CD8-positive, alpha-beta T cell (primary cell): ENCODE measurements at regions of chr6 and their contacts with region 1.

Region 1: DNA sequence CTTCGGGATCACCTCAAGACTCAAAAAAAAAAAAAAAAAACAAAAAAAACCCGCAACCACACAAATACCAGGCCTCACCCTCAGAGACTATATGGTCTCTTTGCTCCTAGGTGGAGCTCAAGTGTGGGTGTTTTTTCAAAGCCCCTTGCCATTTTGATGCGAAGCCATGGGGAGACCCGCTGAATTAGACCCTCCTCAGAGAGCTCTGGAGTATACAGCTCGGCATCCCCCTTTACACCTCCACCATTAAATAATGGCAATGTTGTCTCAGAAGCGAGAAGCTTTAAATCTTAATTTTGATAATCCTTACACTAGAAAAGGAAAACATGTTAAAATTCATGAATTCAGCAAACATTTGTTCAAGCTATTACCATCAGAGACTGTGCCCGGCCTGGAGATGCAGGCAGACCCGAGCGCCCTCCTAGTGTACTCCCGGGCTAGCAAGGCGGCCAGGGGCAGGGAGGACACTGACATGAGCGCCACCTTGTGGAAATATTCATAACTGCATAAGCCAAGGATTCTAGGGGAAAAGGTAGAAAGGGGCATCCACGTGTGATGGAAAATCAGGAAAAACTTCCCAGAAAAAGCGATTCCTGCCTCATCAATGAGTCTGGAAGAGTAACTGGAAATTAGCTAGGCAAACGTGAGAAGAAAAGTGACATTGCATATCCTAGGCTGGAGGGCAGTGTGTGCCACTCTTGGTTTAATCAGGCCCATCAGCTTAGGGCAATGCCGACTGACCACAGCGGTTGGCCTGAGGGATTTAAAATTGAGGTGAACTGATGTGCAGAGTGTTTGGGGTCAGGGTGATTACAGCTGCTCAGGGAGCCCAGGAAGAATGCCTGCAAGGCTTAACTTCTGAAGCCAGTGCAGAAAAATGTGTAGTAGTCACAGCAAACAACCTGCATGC is 72.5 kb downstream of the B3GAT2 start:
- DNase-seq: peak; percentile 12 to 68 (median 55)
- ATAC-seq: peak; percentile 89
- H3K4me3 ChIP-seq: no peak overlapping the region
- H3K4me3 Mint-ChIP-seq: no peak overlapping the region
- H3K27ac ChIP-seq: no peak overlapping the region
- H3K27ac Mint-ChIP-seq: no peak overlapping the region
- H3K4me1 ChIP-seq: no peaks in the 10 kb centered on the region
- H3K4me1 Mint-ChIP-seq: no peaks in the 10 kb centered on the region
- H3K27me3 ChIP-seq: peaks cover 0 to 2% of the 10 kb centered on the region in 2 experiments
- H3K27me3 Mint-ChIP-seq: peaks cover 21% of the 10 kb centered on the region
- CTCF ChIP-seq: peak; percentile 95

Region 2: GRCh38 chr6:70310063-70310694 is 574.1 kb before region 1 on chr6:
- CTCF ChIA-PET with region 1: interaction called, 5 read pairs
- POLR2A ChIA-PET with region 1: no interaction called
- intact Hi-C with region 1: loop called (anchors 1 to 5 kb)
- DNase-seq: peak in 2 of 9 experiments; percentile 28 to 44
- ATAC-seq: no peak
- H3K4me3 ChIP-seq: no peak overlapping the region
- H3K4me3 Mint-ChIP-seq: no peak overlapping the region
- H3K27ac ChIP-seq: no peak overlapping the region
- H3K27ac Mint-ChIP-seq: no peak overlapping the region
- H3K4me1 ChIP-seq: no peaks in the 10 kb centered on the region
- H3K4me1 Mint-ChIP-seq: no peaks in the 10 kb centered on the region
- H3K27me3 ChIP-seq: no peaks in the 10 kb centered on the region
- H3K27me3 Mint-ChIP-seq: peaks cover 8% of the 10 kb centered on the region
- CTCF ChIP-seq: peak; percentile 49

Region 3: DNA sequence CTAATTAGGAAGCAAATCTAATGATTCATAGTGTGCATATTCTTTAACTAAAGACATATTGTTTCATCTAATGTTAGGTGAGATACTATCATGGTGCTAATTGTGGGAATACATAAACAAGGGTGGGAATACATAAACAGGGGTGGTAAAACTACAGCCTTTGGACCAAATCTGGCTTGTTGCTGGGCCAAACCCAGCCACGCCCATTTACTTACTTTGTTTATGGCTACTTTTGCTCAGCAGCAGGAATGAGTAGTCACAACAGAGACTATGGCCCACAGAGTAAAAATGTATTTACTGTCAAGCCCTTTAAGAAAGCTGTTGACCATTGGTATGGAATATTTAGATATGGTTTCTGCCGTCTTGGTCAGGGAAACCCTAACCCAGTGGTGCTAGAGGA is 439.3 kb before region 1 on chr6:
- CTCF ChIA-PET with region 1: no interaction called
- POLR2A ChIA-PET with region 1: no interaction called
- intact Hi-C with region 1: no loop called
- DNase-seq: no peak
- ATAC-seq: no peak
- H3K4me3 ChIP-seq: no peak overlapping the region
- H3K4me3 Mint-ChIP-seq: no peak overlapping the region
- H3K27ac ChIP-seq: no peak overlapping the region
- H3K27ac Mint-ChIP-seq: no peak overlapping the region
- H3K4me1 ChIP-seq: no peaks in the 10 kb centered on the region
- H3K4me1 Mint-ChIP-seq: no peaks in the 10 kb centered on the region
- H3K27me3 ChIP-seq: no peaks in the 10 kb centered on the region
- H3K27me3 Mint-ChIP-seq: no peaks in the 10 kb centered on the region
- CTCF ChIP-seq: no peak

Region 4: GRCh38 chr6:70700922-70701876 is 183.1 kb before region 1 on chr6:
- CTCF ChIA-PET with region 1: interaction called, 65 read pairs
- POLR2A ChIA-PET with region 1: no interaction called
- intact Hi-C with region 1: loop called (anchors 1 kb)
- DNase-seq: no peak
- ATAC-seq: no peak
- H3K4me3 ChIP-seq: no peak overlapping the region
- H3K4me3 Mint-ChIP-seq: no peak overlapping the region
- H3K27ac ChIP-seq: no peak overlapping the region
- H3K27ac Mint-ChIP-seq: no peak overlapping the region
- H3K4me1 ChIP-seq: no peaks in the 10 kb centered on the region
- H3K4me1 Mint-ChIP-seq: peaks cover 66% of the 10 kb centered on the region
- H3K27me3 ChIP-seq: no peaks in the 10 kb centered on the region
- H3K27me3 Mint-ChIP-seq: no peaks in the 10 kb centered on the region
- CTCF ChIP-seq: no peak

Region 5: DNA sequence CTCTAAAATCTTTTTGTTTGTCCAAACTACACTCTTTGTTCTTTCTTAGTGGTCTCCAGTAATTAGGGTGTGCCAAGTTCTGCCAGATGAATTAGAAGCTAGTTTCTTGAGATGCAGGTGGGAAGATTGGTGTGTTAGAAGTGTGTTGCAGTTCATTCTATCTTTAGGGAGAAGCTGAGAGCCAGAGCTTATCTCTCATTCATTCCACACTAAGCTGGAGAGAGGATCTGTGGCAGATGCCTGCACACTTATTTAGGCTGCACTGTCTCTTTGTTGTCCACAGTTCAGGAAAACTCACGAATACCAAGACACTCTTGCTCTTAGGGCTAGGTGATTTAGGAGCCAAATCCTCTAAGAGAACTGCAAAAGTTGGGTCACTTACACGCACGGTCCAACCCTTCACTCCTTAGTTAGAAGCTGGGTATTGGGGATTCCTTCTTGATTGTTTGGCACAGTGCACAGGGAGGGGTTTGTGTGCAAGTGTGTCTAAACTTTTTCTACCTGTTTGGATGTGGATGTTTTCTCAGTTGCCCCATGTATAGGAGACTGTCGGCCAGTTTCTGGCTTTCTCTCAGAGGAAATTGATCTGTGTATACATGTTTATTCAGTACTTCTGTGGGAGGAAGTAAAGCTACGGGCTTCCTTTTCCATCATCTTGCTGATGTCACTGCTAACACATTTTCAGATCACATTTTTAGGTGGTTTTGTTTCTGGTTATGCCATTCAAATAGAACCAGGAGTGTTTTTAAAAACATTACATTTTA is 167.1 kb before region 1 on chr6:
- CTCF ChIA-PET with region 1: interaction called, 127 read pairs
- POLR2A ChIA-PET with region 1: no interaction called
- intact Hi-C with region 1: no loop called
- DNase-seq: peak in 2 of 9 experiments; percentile 19 to 60
- ATAC-seq: peak; percentile 91
- H3K4me3 ChIP-seq: no peak overlapping the region
- H3K4me3 Mint-ChIP-seq: peak overlapping the region; percentile 20
- H3K27ac ChIP-seq: peak overlapping the region in 1 of 2 experiments; percentile 7
- H3K27ac Mint-ChIP-seq: peak overlapping the region; percentile 55
- H3K4me1 ChIP-seq: peaks cover 17% of the 10 kb centered on the region
- H3K4me1 Mint-ChIP-seq: peaks cover 62% of the 10 kb centered on the region
- H3K27me3 ChIP-seq: no peaks in the 10 kb centered on the region
- H3K27me3 Mint-ChIP-seq: no peaks in the 10 kb centered on the region
- CTCF ChIP-seq: no peak